ENCODE measurements at regions of chr1 and their contacts with region 1.

Region 1: GRCh38 chr1:24502709-24503058 is at the start of gene RCAN3:
- DNase-seq: peak; percentile 89
- ATAC-seq: peak; percentile 86
- H3K4me3 Mint-ChIP-seq: peak within 1 kb of the TSS; percentile 91
- H3K27ac Mint-ChIP-seq: peak within 1 kb of the TSS; percentile 97
- H3K4me1 Mint-ChIP-seq: peaks cover 52% of the 10 kb centered on the region
- H3K27me3 Mint-ChIP-seq: no peaks in the 10 kb centered on the region
- CTCF ChIP-seq: no peak
- total RNA-seq, gene RCAN3: 22.8 and 23.6 TPM in 2 replicates

Region 2: DNA sequence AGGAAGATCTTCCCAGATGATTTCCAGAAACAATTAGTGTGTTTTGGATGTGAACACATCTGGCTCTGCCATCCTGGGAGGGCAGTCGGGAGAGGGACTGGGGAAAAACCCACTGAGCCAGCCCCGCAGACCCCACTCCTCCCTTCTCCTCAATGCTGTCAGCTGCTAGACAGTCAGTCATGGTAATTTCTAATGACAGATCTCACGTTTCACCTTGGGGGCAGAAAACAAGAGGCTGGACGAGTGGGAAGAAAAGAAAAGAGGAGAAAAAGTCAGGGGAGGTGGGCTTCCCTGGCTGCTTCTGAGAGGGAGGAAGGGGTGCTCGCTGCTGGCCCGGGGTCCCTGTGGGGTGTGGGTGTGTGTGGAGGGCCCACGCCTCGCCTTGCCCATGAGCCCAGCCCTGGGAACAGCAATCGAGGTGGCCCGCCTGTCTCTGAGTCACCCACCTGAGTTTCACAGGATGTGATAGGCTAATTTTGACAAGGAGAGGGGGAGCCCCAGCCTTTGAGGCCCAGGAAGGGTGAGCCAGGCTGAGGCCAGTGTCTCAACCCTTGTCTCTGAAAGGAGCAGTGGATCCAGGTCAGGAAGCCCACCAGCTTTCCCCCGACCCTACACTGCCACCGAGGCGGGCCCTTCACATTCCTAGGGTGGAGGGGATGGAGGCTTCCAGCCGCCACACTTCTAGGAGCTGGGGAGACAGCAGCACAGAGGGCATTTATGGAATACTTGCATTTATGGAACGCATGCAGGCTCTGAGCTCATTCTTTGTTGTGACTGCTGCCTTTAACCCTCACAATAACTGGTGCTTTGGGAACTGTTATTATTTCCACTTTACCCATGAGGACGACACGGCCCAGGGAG is 266.5 kb before region 1 on chr1:
- CTCF ChIA-PET with region 1: no interaction called
- POLR2A ChIA-PET with region 1: no interaction called
- intact Hi-C with region 1: no loop called
- DNase-seq: no peak
- ATAC-seq: peak; percentile 81
- H3K4me3 Mint-ChIP-seq: no peak overlapping the region
- H3K27ac Mint-ChIP-seq: no peak overlapping the region
- H3K4me1 Mint-ChIP-seq: peaks cover 14% of the 10 kb centered on the region
- H3K27me3 Mint-ChIP-seq: peaks cover 3% of the 10 kb centered on the region
- CTCF ChIP-seq: no peak

Region 3: DNA sequence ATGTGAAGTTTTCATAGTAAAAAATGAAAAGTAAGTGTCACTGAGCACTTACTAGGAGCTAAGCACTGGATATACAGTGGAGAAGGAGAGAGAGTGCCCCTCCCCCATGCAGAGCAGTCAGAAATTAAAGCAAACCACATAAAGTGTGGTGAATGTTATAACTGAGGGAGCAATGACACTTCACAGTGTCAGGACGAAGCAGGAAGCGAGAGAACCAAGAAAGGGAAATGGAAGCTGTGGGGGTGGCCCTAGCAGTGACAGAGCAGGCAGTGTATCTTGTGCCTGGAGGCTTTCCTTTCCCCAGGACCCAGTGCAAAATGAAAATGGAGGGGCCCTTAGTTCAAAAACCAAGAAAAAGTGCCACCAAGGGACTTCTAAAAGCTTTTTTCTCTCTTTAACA is 21.6 kb before region 1 on chr1:
- CTCF ChIA-PET with region 1: interaction called, 3 read pairs
- POLR2A ChIA-PET with region 1: interaction called, 42 read pairs
- intact Hi-C with region 1: loop called (anchors 1 kb)
- DNase-seq: peak; percentile 29
- ATAC-seq: peak; percentile 94
- H3K4me3 Mint-ChIP-seq: peak overlapping the region; percentile 58
- H3K27ac Mint-ChIP-seq: peak overlapping the region; percentile 91
- H3K4me1 Mint-ChIP-seq: peaks cover 36% of the 10 kb centered on the region
- H3K27me3 Mint-ChIP-seq: no peaks in the 10 kb centered on the region
- CTCF ChIP-seq: no peak

Region 4: DNA sequence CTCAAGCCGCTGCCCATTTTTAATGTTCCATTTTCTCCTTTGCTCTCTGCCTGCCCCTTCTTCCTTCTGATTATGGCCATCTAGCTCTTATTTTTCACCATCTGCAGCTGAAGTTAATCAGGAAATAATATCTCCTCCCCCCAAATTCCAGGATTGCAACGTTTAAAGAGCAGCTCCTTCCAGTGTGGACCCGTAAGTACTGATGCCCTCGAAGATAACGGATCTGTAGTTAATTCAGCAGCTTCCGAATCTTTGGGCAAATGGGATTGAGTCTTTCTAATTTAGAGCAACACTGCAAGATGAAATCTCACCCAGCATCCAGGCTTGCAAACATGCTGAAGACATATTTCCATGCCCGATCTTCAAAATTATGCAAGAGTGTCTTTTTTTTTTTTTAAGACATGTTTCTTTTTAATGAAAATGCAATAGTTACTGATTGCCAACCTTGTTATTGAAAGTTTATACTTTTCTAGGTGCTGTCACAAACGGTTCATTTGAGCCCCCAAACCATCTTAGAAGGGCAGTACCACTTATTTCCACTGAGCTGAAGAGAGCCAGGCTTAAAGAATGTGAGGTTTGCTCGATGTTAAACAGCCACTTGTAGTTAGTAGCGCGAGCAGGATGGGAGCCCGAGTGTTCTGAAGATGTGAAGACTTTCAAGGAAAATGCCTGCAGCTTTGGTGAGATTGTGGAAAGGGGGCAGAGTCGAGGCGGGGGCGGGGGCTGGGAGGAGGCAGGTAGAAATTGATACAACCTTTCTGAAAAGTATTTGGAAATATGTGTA is 10.9 kb before region 1 on chr1:
- CTCF ChIA-PET with region 1: no interaction called
- POLR2A ChIA-PET with region 1: interaction called, 11 read pairs
- intact Hi-C with region 1: loop called (anchors 1 kb)
- DNase-seq: no peak
- ATAC-seq: no peak
- H3K4me3 Mint-ChIP-seq: no peak overlapping the region
- H3K27ac Mint-ChIP-seq: no peak overlapping the region
- H3K4me1 Mint-ChIP-seq: peaks cover 15% of the 10 kb centered on the region
- H3K27me3 Mint-ChIP-seq: no peaks in the 10 kb centered on the region
- CTCF ChIP-seq: no peak

Region 5: DNA sequence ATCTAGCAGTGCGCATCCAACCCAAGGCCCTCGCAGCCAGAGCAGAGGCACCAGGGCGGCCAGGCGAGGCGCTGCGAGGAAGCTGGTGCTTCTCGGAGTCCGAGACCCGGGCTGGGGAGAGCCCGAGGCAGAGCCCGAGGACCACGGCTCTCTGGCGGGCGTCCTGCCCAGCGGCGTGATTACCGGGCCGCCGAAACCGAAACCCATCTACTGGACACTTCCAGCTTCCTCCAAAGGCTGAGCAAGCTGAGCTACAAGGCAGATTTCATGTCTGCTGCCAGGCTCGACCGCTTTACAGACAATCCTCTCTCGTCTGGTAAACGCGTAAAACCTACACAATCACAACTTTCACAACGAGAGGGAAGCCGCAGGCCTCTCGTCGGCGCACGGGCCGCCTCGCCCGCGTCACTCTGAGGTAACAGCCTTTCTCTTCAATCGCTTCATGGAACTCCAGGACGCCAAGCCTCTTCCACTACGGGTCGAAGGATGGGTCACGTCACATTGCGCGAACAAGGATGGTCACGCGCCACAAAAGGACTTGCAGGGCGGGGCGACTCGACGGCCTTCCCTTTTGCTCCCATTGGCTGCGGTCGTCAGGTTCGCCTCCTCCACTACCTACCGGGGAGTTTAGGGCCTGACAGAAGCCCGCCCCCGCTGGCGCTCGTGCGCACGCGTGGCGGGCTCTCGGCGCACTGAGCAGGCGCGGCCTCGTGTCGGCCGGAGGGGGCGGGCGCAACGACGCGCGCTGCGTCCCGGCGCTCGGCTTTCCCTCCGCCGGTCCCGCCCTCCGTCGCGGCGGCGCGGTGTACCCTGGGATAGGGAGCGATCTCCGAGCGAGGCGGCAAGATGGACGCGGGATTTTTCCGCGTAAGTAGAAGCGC is 140.0 kb after region 1 on chr1 and contains the start of gene SRRM1:
- CTCF ChIA-PET with region 1: interaction called, 3 read pairs
- POLR2A ChIA-PET with region 1: interaction called, 7 read pairs
- intact Hi-C with region 1: loop called (anchors 2 kb)
- DNase-seq: peak; percentile 96
- ATAC-seq: peak; percentile 90
- H3K4me3 Mint-ChIP-seq: peak within 1 kb of the TSS; percentile 96
- H3K27ac Mint-ChIP-seq: peak within 1 kb of the TSS; percentile 99
- H3K4me1 Mint-ChIP-seq: peaks cover 38% of the 10 kb centered on the region
- H3K27me3 Mint-ChIP-seq: no peaks in the 10 kb centered on the region
- CTCF ChIP-seq: no peak
- total RNA-seq, gene SRRM1: 214 and 220 TPM in 2 replicates

Region 6: DNA sequence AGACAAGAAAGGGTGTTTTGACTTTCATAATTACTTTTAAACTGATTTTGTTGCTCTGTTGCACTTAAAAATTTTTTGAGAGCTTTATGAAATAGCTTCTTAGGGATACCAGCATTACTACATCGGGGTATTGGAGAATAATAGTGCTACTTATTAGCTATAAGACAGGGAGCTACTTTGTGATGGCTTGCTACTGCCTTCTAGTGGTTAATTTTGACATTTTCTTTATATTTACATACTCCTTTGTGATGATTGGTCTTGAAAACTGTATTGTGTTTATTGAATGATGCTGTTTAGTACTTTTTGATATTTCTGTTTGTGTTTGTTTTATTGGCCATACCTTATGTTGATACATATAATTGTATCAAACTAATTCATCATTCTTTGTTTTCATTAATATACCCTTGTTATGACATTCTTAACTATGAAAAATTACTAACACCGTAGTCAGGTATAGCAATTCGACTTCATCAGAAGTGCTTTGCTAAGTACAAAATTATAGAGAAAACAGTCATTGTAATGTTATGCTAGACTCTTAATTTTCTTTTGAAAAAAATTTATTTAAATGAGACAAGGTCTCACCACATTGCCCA is 328.1 kb after region 1 on chr1:
- CTCF ChIA-PET with region 1: no interaction called
- POLR2A ChIA-PET with region 1: no interaction called
- intact Hi-C with region 1: no loop called
- DNase-seq: no peak
- ATAC-seq: peak; percentile 74
- H3K4me3 Mint-ChIP-seq: no peak overlapping the region
- H3K27ac Mint-ChIP-seq: no peak overlapping the region
- H3K4me1 Mint-ChIP-seq: peaks cover 46% of the 10 kb centered on the region
- H3K27me3 Mint-ChIP-seq: no peaks in the 10 kb centered on the region
- CTCF ChIP-seq: peak; percentile 51

Measured in activated B cell treated with CpG ODN at 0.5 μM for 24 hours (primary cell).